Activated CD4-positive, alpha-beta memory T cell treated with anti-CD3 and anti-CD28 coated beads for 36 hours (primary cell): ENCODE measurements at regions of chr20 and their contacts with region 1.

Region 1: GRCh38 chr20:41738604-41739206 is 120.5 kb upstream of the CHD6 start:
- DNase-seq: peak; percentile 64
- H3K4me3 Mint-ChIP-seq: no peak overlapping the region
- H3K27ac Mint-ChIP-seq: no peak overlapping the region
- H3K4me1 Mint-ChIP-seq: no peaks in the 10 kb centered on the region
- H3K27me3 Mint-ChIP-seq: no peaks in the 10 kb centered on the region

Region 2: DNA sequence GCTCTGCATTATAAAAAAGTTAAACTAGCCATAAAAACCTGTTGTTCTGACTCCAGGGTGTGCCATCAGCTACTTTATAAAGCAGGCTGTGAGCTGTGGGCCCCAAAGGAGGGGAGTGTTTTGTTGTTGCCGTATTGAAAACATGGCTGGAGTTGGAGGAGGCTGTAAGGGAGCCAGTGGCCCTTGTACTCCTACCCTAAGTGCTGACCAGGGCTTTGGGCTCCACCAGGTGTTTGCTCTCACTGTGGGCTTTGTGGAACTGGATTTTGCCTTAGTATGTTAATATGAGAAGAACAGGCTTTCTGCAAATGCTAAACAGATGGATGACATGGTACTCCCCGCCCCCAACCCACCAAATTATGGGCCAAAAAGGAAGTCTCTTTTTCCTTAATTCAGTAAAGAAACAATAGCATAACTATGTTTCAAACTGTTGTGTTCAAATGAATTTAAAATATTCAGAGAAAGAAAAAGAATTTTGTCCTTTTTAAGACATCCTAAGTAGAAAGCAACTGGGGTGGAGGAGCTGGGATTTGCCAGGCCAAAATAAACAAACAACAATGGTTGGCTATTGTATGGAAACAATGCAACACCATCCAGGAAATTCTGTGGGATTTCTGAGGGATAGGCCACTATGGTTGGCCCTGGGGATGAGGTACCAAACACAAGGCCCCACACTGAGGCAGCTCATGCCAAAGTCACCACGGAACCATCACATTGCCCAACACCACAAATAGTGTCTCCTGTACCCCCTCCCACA is 538.1 kb before region 1 on chr20:
- CTCF ChIA-PET with region 1: no interaction called
- POLR2A ChIA-PET with region 1: no interaction called
- intact Hi-C with region 1: no loop called
- DNase-seq: no peak
- H3K4me3 Mint-ChIP-seq: no peak overlapping the region
- H3K27ac Mint-ChIP-seq: no peak overlapping the region
- H3K4me1 Mint-ChIP-seq: peaks cover 4% of the 10 kb centered on the region
- H3K27me3 Mint-ChIP-seq: no peaks in the 10 kb centered on the region

Region 3: GRCh38 chr20:43408848-43409576 is 1670.3 kb after region 1 on chr20:
- CTCF ChIA-PET with region 1: interaction called, 15 read pairs
- POLR2A ChIA-PET with region 1: no interaction called
- intact Hi-C with region 1: loop called (anchors 2 kb)
- DNase-seq: peak; percentile 12
- H3K4me3 Mint-ChIP-seq: no peak overlapping the region
- H3K27ac Mint-ChIP-seq: no peak overlapping the region
- H3K4me1 Mint-ChIP-seq: no peaks in the 10 kb centered on the region
- H3K27me3 Mint-ChIP-seq: peaks cover 56% of the 10 kb centered on the region